Ascending aorta (tissue), 2 donors: ENCODE measurements at regions of chr16 and their contacts with region 1.

Region 1: GRCh38 chr16:66924527-66925321 is 611 bp downstream of the RRAD start:
- DNase-seq: no peak
- H3K4me3 ChIP-seq: peak overlapping the region; percentile 59 to 93
- H3K27ac ChIP-seq: peak overlapping the region; percentile 84 to 99
- H3K4me1 ChIP-seq: peaks cover 28 to 51% of the 10 kb centered on the region in 2 donors
- H3K27me3 ChIP-seq: no peaks in the 10 kb centered on the region
- CTCF ChIP-seq: peak; percentile 40 to 61 (median 43)

Region 2: DNA sequence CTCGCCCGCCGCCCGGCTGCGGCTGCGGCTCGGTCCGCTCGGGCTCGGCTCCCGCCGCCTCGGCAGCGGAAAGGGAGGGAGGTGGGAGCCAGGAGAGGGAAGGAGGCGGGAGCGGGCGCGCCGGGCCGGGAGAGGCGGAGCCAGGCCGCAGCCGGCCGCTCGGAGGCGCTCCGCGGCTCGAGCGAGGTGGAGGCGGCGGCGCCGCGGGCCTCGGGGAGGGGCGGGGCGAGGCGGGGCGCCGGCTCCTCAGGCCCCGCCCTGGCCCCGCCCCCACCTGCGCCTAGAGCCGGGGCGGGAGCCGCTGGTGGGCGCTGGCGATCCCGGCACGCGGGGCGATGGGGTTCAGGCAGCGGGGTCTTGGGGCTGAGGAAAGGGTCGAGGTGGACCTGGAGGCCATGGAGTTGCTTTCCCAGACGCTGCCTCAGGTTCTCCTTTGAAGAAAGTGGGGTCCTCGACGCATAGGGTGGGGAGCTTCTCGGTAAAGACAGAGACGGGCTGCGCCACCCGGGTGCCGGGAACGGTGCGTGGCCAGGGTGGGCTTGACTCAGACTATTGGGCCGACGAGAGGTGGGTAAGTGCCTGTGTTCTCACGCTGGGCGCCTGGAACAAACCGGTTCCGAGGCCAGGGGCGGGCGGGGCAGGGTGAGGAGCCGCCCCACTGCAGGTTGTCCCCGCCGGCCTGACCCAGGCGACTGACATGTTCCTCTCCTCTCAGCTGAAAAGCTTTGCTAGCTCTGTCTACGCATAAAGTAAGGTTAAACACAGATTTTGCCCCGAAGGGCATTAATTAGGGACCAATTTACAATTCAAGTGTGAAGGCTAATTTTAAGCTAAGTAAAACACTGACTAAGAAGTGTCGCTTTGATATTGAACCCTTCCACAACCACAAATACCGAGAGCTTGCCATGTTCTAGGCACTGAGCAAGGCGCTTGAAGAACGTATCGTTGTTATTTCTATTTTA is 227.8 kb before region 1 on chr16 and contains the start of gene CMTM4:
- intact Hi-C with region 1: loop called (anchors 5 kb)
- DNase-seq: peak; percentile 37 to 90
- H3K4me3 ChIP-seq: peak within 1 kb of the TSS; percentile 83 to 88
- H3K27ac ChIP-seq: peak within 1 kb of the TSS; percentile 75
- H3K4me1 ChIP-seq: peaks cover 0 to 3% of the 10 kb centered on the region in 2 donors
- H3K27me3 ChIP-seq: no peaks in the 10 kb centered on the region
- CTCF ChIP-seq: peak in 1 of 3 experiments; percentile 22
- total RNA-seq, gene CMTM4: 20.1 TPM

Region 3: DNA sequence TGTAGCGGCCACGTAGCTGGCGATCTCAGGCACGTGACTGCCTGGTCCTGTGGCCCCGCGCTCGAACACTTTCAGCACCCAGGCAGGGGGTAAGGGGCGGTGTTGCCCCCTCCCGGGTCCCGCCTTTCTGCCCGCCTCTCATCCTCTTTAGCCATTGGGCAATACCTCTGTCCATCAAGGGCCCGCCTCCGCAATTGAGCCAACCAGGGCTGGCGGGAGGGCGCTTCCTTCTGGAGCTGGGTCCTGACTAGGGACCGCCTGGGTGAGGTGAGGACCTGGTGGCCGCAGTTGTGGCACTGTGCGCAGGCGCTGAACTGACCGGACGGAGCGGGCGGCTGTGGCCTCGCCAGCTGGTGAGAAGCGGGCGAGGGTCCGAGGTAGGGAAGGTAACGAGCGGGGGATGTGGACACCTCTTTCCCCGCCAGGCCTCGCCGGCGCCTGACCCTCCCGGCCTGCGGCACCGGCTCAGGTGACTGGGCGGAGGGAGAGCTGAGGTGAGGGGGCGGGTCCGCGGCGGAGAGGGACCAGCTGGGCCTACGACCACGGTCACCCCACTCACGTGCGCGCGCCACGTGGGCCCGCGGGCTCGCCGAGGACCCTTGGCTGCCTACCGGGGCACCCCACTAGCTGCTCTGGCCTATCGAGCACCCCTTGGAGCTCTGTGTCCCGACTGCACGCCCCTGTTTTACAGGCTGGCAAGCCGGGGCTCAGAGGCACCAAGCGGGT is 44.3 kb before region 1 on chr16 and contains the start of gene PDP2:
- intact Hi-C with region 1: loop called (anchors 5 kb)
- DNase-seq: peak; percentile 87 to 98
- H3K4me3 ChIP-seq: peak within 1 kb of the TSS; percentile 71 to 95
- H3K27ac ChIP-seq: peak within 1 kb of the TSS; percentile 70 to 71
- H3K4me1 ChIP-seq: peaks cover 2 to 5% of the 10 kb centered on the region in 2 donors
- H3K27me3 ChIP-seq: no peaks in the 10 kb centered on the region
- CTCF ChIP-seq: no peak
- total RNA-seq, gene PDP2: 2.8 TPM

Region 4: GRCh38 chr16:66894948-66895688 is 29.6 kb before region 1 on chr16:
- intact Hi-C with region 1: loop called (anchors 1 kb)
- DNase-seq: peak in 1 of 2 donors; percentile 85
- H3K4me3 ChIP-seq: no peak overlapping the region
- H3K27ac ChIP-seq: peak overlapping the region; percentile 40 to 54
- H3K4me1 ChIP-seq: peaks cover 16 to 39% of the 10 kb centered on the region in 2 donors
- H3K27me3 ChIP-seq: no peaks in the 10 kb centered on the region
- CTCF ChIP-seq: peak; percentile 86 to 93 (median 88)

Region 5: GRCh38 chr16:66899945-66900710 is 24.6 kb before region 1 on chr16:
- intact Hi-C with region 1: loop called (anchors 1 kb)
- DNase-seq: peak in 1 of 2 donors; percentile 92
- H3K4me3 ChIP-seq: no peak overlapping the region
- H3K27ac ChIP-seq: peak overlapping the region; percentile 90 to 92
- H3K4me1 ChIP-seq: peaks cover 45 to 81% of the 10 kb centered on the region in 2 donors
- H3K27me3 ChIP-seq: no peaks in the 10 kb centered on the region
- CTCF ChIP-seq: no peak

Region 6: DNA sequence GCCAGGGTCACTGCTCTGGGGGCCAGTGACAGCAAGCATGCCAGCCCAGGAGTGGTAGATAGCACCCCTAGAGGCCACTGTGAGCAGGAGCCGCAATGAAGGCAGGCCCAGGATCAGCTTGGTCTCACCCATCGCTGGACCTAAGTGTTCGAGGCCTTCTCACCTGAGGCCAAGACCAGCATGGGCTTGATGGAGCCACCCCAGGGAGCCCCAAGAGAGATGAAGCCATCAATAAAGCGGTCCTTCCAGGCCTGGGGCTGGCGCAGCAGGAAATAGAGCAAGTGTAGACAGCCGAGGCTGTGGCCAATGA is 1017.4 kb after region 1 on chr16:
- intact Hi-C with region 1: loop called (anchors 10 kb)
- DNase-seq: no peak
- H3K4me3 ChIP-seq: no peak overlapping the region
- H3K27ac ChIP-seq: peak overlapping the region; percentile 81 to 86
- H3K4me1 ChIP-seq: peaks cover 6 to 16% of the 10 kb centered on the region in 2 donors
- H3K27me3 ChIP-seq: no peaks in the 10 kb centered on the region
- CTCF ChIP-seq: peak; percentile 26 to 60 (median 34)